Activated T-helper 1 cell treated with anti-CD3 and anti-CD28 coated beads, Interleukin-12 subunit alpha, Interleukin-12 subunit beta, Interleukin-2, Interleukin-4 antibody, amounts not matched to agents 30 ng/mL and 10 ng/mL and 1 ng/mL, durations not matched to agents 14 hours and 24 hours and 36 hours (primary cell): ENCODE measurements at regions of chr16 and their contacts with region 1.

Region 1: GRCh38 chr16:12067714-12068401 is 91.3 kb downstream of the SNX29 start:
- DNase-seq: peak; percentile 40
- H3K4me3 Mint-ChIP-seq: no peak overlapping the region
- H3K27ac Mint-ChIP-seq: no peak overlapping the region
- H3K4me1 Mint-ChIP-seq: no peaks in the 10 kb centered on the region
- H3K27me3 Mint-ChIP-seq: no peaks in the 10 kb centered on the region

Region 2: DNA sequence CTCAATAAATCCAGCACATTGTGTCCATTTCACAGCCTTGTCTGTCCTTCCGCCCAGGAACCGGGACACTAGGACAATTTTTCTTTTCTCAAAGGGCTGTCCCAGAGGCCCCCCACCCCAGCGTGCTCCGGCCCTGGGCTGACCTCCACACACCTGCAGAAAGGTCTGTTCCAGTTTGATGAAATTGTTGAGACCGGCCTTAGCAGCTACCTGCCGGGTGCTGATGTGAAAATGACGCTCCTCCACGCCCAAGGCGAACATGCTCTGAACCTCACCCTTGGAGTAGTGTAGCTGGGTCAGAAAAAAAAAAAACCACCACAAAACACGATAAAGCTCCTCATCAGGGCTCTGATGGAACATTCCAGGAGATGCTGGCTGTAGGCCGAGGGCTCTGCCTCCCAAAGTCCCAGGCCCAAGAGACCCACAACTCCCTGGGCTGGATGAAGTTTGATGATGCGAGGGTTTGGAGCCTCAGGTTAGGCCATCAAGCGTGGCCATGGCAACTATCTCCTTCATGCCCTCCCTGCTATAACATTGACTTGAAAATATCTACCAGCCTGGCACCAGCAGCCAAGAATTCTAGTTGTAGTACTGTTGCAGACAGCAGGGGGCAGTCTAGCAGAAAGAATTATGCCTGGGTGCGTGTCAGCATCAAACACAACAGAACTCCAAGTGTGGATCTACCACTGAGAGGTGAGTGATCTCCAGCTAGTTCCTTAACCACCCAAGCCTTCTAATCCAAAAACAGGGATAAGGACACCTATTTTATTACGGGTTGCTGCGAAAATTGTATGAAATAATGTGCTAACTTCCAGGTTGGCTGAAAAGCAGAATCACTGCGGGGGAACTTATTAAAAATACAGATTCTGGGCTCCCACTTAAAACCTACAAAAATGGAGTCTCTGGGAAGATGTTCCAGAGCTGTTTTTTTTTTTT is 660.5 kb before region 1 on chr16:
- intact Hi-C with region 1: loop called (anchors 5 kb)
- DNase-seq: peak; percentile 48
- H3K4me3 Mint-ChIP-seq: no peak overlapping the region
- H3K27ac Mint-ChIP-seq: no peak overlapping the region
- H3K4me1 Mint-ChIP-seq: no peaks in the 10 kb centered on the region
- H3K27me3 Mint-ChIP-seq: peaks cover 6% of the 10 kb centered on the region

Region 3: DNA sequence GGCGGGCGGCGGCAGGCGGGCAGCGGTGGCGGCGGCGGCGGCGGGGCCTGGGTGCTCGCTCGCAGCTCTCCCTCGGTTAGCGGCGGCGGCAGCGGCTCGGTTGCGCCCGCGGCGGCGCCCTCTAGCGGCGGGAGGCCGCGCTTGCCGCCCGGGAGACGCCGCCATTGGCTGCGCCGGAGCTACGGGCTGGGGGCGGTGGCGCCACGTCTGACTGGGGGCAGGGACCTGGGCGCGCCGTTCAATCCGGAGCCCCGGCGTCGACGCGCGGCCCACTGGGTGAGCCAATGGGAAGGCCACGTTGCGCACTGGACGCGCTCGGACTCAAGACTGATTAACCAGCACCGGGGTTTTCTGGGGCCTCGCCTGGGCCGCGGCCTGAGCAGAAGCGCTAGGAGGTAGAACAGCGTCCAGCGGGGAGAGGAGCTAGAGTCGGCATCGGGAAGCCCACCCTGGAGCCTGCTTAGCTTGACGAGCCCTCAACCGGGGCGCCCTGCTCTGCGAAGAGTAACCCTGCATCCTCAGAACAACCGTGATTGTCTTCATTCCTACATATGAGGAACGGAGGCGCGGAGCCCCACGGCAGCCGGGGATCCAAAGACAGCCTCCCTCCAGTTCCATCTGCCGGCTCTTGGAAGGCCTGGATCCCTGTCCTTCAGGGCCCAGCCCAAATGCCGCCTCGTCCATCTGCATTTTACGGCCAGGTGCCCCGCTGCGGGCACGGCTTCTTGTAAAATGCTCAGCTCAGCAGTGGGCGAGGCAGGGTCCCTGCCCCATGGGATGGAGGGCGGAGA is 270.5 kb before region 1 on chr16 and contains the start of gene ZC3H7A:
- intact Hi-C with region 1: loop called (anchors 5 kb)
- DNase-seq: peak; percentile 95
- H3K4me3 Mint-ChIP-seq: peak within 1 kb of the TSS; percentile 92
- H3K27ac Mint-ChIP-seq: peak within 1 kb of the TSS; percentile 94
- H3K4me1 Mint-ChIP-seq: peaks cover 75% of the 10 kb centered on the region
- H3K27me3 Mint-ChIP-seq: no peaks in the 10 kb centered on the region
- total RNA-seq, gene ZC3H7A: 71.0 and 78.9 TPM in 2 replicates

Region 4: GRCh38 chr16:11915644-11916523 is 152.0 kb before region 1 on chr16 and contains the start of gene GSPT1:
- intact Hi-C with region 1: loop called (anchors 2 kb)
- DNase-seq: peak; percentile 99
- H3K4me3 Mint-ChIP-seq: peak within 1 kb of the TSS; percentile 91
- H3K27ac Mint-ChIP-seq: peak within 1 kb of the TSS; percentile 94
- H3K4me1 Mint-ChIP-seq: peaks cover 32% of the 10 kb centered on the region
- H3K27me3 Mint-ChIP-seq: peaks cover 8% of the 10 kb centered on the region
- total RNA-seq, gene GSPT1: 207 and 214 TPM in 2 replicates